ENCODE measurements at regions of chr19 and their contacts with region 1.

Region 1: DNA sequence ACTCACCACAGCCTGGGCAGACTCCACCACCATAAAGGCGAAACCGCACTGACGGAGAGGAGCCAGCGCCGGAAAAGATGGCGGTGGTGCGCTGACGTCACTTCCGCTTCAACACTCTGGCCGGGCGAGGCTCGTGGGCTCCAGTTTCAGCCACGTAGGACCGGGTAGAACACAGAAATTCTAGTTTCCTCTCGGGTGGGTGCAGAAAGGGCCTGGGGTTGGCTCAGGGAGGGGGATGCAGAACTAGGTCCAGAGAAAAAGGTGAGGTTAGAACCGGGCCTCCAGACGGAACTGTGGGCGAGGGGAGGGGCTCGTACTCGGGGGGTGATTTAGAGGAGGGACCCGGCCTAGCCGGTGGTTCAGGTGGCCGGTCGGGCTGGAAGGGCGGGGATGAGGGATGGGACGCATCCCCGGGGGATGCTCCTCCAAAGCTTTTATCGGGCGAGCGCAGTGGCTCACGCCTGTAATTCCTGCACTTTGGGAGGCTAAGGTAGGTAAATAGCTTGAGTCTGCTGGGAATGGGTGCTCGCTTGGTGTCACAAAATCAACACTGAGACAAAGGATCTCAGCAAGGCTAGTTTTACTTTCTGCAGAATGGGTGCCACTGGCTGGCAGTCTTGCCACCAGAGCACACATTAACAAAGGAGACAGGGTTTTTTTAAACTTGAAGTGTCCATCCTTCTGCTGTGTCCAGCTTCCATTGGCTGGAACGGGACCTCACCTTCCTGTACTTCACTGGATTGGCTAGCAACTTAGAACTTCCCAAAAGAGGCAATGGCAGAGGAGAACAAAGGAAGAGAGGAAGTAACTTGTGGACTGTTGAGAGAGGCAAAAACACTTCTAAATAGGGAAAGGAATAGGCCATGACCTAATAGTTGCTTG is at the start of gene ZNF561:
- DNase-seq: peak; percentile 96
- H3K4me3 Mint-ChIP-seq: peak within 1 kb of the TSS; percentile 97
- H3K27ac Mint-ChIP-seq: peak within 1 kb of the TSS; percentile 98
- H3K4me1 Mint-ChIP-seq: peaks cover 23% of the 10 kb centered on the region
- H3K27me3 Mint-ChIP-seq: peaks cover 2% of the 10 kb centered on the region
- total RNA-seq, gene ZNF561: 35.3 and 37.2 TPM in 2 replicates

Region 2: GRCh38 chr19:9205501-9206113 is 415.8 kb before region 1 on chr19:
- intact Hi-C with region 1: loop called (anchors 10 kb)
- DNase-seq: peak; percentile 90
- H3K4me3 Mint-ChIP-seq: peak overlapping the region; percentile 56
- H3K27ac Mint-ChIP-seq: no peak overlapping the region
- H3K4me1 Mint-ChIP-seq: peaks cover 5% of the 10 kb centered on the region
- H3K27me3 Mint-ChIP-seq: no peaks in the 10 kb centered on the region

Region 3: GRCh38 chr19:9597027-9597426 is 24.4 kb before region 1 on chr19:
- intact Hi-C with region 1: no loop called
- DNase-seq: no peak
- H3K4me3 Mint-ChIP-seq: no peak overlapping the region
- H3K27ac Mint-ChIP-seq: peak overlapping the region; percentile 65
- H3K4me1 Mint-ChIP-seq: peaks cover 3% of the 10 kb centered on the region
- H3K27me3 Mint-ChIP-seq: no peaks in the 10 kb centered on the region

Region 4: GRCh38 chr19:9914315-9915207 is 293.2 kb after region 1 on chr19:
- intact Hi-C with region 1: loop called (anchors 10 kb)
- DNase-seq: peak; percentile 94
- H3K4me3 Mint-ChIP-seq: peak overlapping the region; percentile 69
- H3K27ac Mint-ChIP-seq: peak overlapping the region; percentile 27
- H3K4me1 Mint-ChIP-seq: peaks cover 6% of the 10 kb centered on the region
- H3K27me3 Mint-ChIP-seq: peaks cover 23% of the 10 kb centered on the region

Measured in activated CD4-positive, alpha-beta T cell treated with anti-CD3 and anti-CD28 coated beads, Interleukin-2, amount 10 ng/mL, durations not matched to agents 24 days and 14 days (primary cell).